Endothelial cell of umbilical vein (primary cell): ENCODE measurements at regions of chr12 and their contacts with region 1.

Region 1: GRCh38 chr12:39319187-39319586 is 123.7 kb downstream of the KIF21A start:
- DNase-seq: no peak
- H3K4me3 ChIP-seq: no peak overlapping the region
- H3K27ac ChIP-seq: no peak overlapping the region
- H3K4me1 ChIP-seq: no peaks in the 10 kb centered on the region
- H3K27me3 ChIP-seq: no peaks in the 10 kb centered on the region
- CTCF ChIP-seq: no peak
- POLR2A ChIP-seq: no peak

Region 2: DNA sequence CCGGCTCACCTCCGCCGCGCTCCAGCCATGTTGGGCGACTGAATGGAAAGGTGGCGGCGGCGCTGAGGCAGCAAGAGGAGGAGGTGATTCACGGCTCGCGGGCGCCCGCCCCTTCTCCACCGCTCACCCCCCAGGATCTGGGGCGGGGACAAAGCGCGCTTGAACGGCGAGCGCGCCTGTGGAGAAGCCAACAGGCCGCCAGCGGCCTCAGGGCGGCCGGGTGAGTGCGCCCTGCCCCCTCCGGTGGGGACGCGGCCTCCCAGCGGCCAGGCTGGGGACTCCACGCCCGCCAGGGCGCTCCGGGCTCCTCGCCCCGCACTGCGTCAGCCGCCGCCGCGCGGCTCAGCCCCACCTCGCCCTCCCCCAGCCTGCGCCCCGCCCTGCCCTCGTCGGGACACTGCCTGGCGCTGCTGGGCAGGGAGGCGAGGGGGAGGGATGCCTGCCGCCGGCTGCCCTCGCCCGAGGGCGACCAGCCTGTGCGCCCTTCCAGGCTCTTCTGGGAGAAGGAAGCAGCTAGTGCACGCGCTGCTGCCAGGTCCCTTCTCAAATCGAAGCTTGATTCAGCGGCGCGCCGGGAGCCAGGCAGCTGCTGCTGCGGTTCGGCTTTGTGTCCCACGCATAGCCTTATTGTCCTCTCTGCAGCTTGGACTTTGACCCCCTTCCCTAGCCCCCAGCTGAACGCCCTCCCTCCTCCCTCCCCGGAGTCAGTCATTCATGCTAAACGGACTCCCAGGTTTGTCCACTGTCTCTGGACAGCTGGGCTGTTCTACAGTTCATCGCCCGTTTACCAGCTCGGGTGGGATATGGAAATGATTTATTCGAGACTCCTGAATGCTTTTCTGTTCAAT is 124.1 kb after region 1 on chr12 and contains the start of gene KIF21A:
- CTCF ChIA-PET with region 1: interaction called, 4 read pairs
- POLR2A ChIA-PET with region 1: no interaction called
- dilution Hi-C with region 1: no loop called
- intact Hi-C with region 1: loop called (anchors 2 kb)
- DNase-seq: peak; percentile 94
- H3K4me3 ChIP-seq: peak within 1 kb of the TSS; percentile 78 to 87 (median 84)
- H3K27ac ChIP-seq: peak within 1 kb of the TSS; percentile 71
- H3K4me1 ChIP-seq: peaks cover 12% of the 10 kb centered on the region
- H3K27me3 ChIP-seq: peaks cover 2% of the 10 kb centered on the region in 2 experiments
- CTCF ChIP-seq: peak; percentile 43 to 65
- POLR2A ChIP-seq: peak; percentile 71
- total RNA-seq, gene KIF21A: 9.6 and 10.1 TPM in 2 replicates

Region 3: GRCh38 chr12:39692258-39692853 is 373.2 kb after region 1 on chr12:
- CTCF ChIA-PET with region 1: interaction called, 12 read pairs
- POLR2A ChIA-PET with region 1: no interaction called
- dilution Hi-C with region 1: no loop called
- intact Hi-C with region 1: loop called (anchors 1 kb)
- DNase-seq: peak; percentile 5
- H3K4me3 ChIP-seq: no peak overlapping the region
- H3K27ac ChIP-seq: no peak overlapping the region
- H3K4me1 ChIP-seq: no peaks in the 10 kb centered on the region
- H3K27me3 ChIP-seq: no peaks in the 10 kb centered on the region
- CTCF ChIP-seq: no peak
- POLR2A ChIP-seq: no peak

Region 4: GRCh38 chr12:39764944-39765560 is 445.9 kb after region 1 on chr12:
- CTCF ChIA-PET with region 1: no interaction called
- POLR2A ChIA-PET with region 1: no interaction called
- dilution Hi-C with region 1: no loop called
- intact Hi-C with region 1: loop called (anchors 10 kb)
- DNase-seq: peak; percentile 52
- H3K4me3 ChIP-seq: no peak overlapping the region
- H3K27ac ChIP-seq: no peak overlapping the region
- H3K4me1 ChIP-seq: no peaks in the 10 kb centered on the region
- H3K27me3 ChIP-seq: no peaks in the 10 kb centered on the region
- CTCF ChIP-seq: peak; percentile 59 to 64
- POLR2A ChIP-seq: no peak

Region 5: GRCh38 chr12:39990122-39991101 is 671.2 kb after region 1 on chr12:
- CTCF ChIA-PET with region 1: no interaction called
- POLR2A ChIA-PET with region 1: no interaction called
- dilution Hi-C with region 1: no loop called
- intact Hi-C with region 1: loop called (anchors 2 kb)
- DNase-seq: peak; percentile 65
- H3K4me3 ChIP-seq: no peak overlapping the region
- H3K27ac ChIP-seq: no peak overlapping the region
- H3K4me1 ChIP-seq: no peaks in the 10 kb centered on the region
- H3K27me3 ChIP-seq: no peaks in the 10 kb centered on the region
- CTCF ChIP-seq: peak; percentile 83 to 85
- POLR2A ChIP-seq: no peak

Region 6: DNA sequence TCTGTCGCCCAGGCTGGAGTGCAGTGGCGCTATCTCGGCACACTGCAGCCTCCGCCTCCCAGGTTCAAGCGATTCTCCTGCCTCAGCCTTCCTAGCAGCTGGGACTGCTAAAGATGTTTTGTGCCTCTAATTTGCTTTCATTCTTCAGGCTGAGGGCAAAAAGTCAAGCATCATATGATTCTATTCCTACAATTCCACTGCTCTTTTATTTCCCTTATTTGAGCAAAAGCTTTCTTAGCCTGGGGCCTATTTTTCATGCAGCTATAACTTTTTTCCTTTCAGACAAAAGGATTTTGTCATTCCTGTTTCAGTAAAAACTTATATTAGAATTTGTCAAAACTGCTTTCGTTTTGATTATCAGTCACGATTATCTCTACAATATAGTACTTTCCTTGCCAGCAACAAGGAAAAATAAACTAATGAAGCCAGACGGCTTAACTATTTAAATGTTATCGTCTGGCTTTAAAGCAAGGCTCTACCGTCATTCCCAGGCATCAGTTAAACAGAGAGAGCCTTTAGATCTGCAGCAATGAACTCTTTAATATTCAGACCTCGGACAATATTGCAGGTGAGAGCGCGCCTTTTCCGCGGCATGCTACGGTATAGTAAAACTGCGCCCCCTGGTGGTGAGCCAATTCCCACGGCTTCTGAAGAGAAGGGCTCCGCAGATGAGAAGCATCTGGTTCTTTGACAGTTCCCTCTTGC is 788.1 kb after region 1 on chr12:
- CTCF ChIA-PET with region 1: no interaction called
- POLR2A ChIA-PET with region 1: no interaction called
- dilution Hi-C with region 1: no loop called
- intact Hi-C with region 1: loop called (anchors 10 kb)
- DNase-seq: peak; percentile 72
- H3K4me3 ChIP-seq: peak overlapping the region in 2 of 3 experiments; percentile 17 to 67
- H3K27ac ChIP-seq: no peak overlapping the region
- H3K4me1 ChIP-seq: peaks cover 14% of the 10 kb centered on the region
- H3K27me3 ChIP-seq: no peaks in the 10 kb centered on the region
- CTCF ChIP-seq: peak; percentile 85 to 92
- POLR2A ChIP-seq: no peak

Region 7: GRCh38 chr12:40215977-40216376 is 896.8 kb after region 1 on chr12:
- CTCF ChIA-PET with region 1: no interaction called
- POLR2A ChIA-PET with region 1: no interaction called
- dilution Hi-C with region 1: no loop called
- intact Hi-C with region 1: no loop called
- DNase-seq: no peak
- H3K4me3 ChIP-seq: no peak overlapping the region
- H3K27ac ChIP-seq: no peak overlapping the region
- H3K4me1 ChIP-seq: no peaks in the 10 kb centered on the region
- H3K27me3 ChIP-seq: peaks cover 0 to 2% of the 10 kb centered on the region in 2 experiments
- CTCF ChIP-seq: no peak
- POLR2A ChIP-seq: no peak